ENCODE measurements at regions of chrX and their contacts with region 1.

Region 1: DNA sequence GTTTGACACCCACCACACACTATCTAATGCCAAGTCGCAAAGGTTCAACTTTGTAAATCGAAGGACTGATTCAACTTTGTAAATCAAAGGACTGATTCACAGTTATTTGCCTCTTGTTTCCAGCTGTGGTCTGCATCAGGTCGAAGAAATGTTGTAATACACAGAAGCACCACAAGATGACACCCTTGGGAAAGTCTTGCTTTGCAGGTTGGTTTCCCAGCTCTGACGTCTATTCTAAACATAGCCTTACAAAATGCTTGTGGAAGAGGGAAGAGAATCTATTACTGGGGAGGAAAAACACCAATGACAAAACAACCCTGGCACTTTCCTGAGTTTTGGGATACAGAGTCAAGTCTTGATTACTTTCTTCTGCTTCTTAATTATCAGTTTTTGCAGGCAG is 35.3 kb downstream of the SUPT20HL1 start:
- DNase-seq: peak; percentile 68
- H3K4me3 ChIP-seq: no peak overlapping the region
- CTCF ChIP-seq: peak; percentile 70

Region 2: DNA sequence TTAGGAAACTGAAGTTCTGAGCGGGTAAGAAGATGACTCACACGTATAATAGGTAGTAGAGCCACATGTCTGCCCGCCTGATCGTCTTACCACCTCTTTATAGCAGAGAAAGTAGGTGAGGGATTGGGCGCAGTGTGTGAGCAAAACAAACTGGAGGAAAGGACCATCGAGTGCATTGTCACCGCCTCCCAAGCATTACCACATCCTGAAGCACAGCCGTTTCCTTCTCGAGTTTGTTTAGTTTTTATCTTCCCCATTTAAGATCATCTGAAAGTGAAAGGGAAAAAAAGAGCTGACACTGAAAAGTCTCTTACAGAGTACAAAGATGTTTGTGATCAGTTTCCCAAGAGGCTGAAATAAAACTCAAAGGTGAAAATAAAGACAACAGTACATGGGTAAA is 84.1 kb after region 1 on chrX:
- in situ Hi-C with region 1: no loop called
- DNase-seq: no peak
- H3K4me3 ChIP-seq: no peak overlapping the region
- CTCF ChIP-seq: no peak

Region 3: DNA sequence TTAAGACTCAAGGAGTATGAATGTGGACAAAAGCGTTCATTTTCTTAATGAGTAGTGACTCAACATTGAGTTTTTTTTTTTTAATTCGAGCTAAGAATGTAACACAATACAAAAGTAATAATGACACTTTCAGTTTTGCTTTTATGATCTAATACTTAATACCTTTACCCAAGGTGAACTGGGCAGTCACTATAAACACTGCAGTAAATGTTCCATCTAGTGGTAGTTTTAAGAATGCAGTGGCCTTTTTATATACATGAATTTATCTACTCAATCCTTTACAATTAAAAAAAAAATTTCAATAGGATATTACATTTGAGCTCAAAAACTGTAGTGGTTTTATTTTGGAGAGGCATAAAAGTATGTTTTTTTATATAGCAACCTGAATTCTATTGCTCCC is 103.2 kb after region 1 on chrX:
- in situ Hi-C with region 1: loop called (anchors 5 kb)
- DNase-seq: no peak
- H3K4me3 ChIP-seq: no peak overlapping the region
- CTCF ChIP-seq: peak; percentile 31